ENCODE measurements at regions of chr10 and their contacts with region 1.

Region 1: DNA sequence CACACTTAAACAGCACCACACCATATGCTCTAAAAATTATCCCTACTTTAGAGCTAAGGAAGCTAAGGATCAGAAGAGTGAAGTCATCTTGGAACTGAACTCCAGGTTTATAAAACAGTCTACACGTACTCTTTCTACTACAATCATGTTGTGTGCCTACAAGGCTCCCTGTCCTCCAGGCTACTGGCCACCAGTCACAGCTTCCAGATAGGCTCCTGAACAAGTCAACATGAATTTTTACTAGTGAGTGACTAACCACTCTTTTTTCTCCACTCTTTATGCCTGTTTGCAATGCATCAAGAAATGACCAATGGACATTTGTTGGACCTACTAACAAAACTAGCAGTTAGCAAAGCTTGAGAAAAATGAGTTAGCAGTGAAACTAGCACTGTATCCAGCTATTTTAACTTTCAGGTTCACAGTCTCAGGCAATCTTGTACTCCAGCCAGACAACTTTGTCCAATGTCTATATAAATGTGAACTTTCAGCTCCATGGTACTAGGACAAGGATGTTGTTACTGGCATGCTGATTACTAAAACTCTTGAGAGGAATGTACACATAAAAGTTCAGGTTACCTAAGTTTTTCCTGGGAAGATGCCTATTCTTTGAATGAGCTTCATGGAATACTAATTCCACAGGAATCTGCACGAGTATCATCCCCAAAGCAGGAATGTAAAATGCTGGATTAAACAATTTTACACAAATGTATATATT is 180.0 kb downstream of the BTAF1 start:
- DNase-seq: peak in 1 of 3 donors; percentile 57
- ATAC-seq: peak; percentile 61 to 86 (median 72)
- H3K4me3 ChIP-seq: peak overlapping the region in 2 of 3 donors; percentile 1 to 12
- H3K27ac ChIP-seq: peak overlapping the region; percentile 2 to 93 (median 85)
- H3K4me1 ChIP-seq: peaks cover 0 to 77% (median 33%) of the 10 kb centered on the region in 4 donors
- H3K27me3 ChIP-seq: no peaks in the 10 kb centered on the region
- CTCF ChIP-seq: no peak
- POLR2A ChIP-seq: no peak

Region 2: DNA sequence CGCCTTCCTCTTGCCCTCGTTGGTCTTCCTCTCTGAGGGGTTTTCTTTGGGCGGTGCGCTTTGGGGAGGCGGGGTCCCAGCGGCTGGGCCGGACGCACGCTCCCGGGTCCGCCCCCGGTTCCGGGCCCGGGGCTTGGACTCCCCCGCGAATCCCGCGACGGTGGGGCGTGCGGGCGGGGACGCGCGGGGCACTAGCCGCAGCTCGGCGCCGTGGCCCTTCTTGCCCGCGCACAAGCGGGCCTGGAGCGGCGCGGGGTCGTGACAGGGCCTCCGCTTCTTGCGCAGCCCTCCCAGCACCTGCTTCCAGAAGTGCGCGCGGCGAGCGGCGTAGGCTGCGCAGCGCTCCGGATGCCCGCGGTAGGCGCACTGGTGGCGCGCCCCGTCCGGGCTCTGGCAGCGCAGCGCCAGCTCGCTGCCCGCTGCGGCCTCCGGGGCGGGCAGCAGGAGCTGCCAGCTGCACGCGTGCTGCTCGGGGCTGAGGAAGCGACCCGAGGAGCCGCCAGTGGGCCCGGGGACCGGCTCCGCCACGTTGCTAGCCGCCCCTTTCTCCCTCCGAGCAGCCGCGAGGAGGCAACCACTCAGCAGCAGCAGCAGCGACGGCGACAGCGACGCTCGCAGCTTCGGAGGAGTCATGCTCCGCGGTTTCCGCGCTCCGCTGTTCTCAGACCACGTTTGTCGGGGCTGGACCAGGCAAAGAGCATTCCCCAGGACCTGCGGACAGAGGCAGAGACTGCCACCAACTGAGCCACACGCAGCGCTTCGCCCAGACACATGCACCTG is 195.0 kb before region 1 on chr10:
- intact Hi-C with region 1: no loop called
- DNase-seq: peak; percentile 78 to 82 (median 82)
- ATAC-seq: peak; percentile 92 to 96 (median 94)
- H3K4me3 ChIP-seq: peak overlapping the region; percentile 50 to 83 (median 74)
- H3K27ac ChIP-seq: peak overlapping the region; percentile 20 to 52 (median 34)
- H3K4me1 ChIP-seq: peaks cover 0 to 6% (median 0%) of the 10 kb centered on the region in 4 donors
- H3K27me3 ChIP-seq: no peaks in the 10 kb centered on the region
- CTCF ChIP-seq: peak; percentile 27 to 54 (median 43)
- POLR2A ChIP-seq: peak; percentile 54

Region 3: GRCh38 chr10:91944880-91945630 is 158.5 kb before region 1 on chr10:
- intact Hi-C with region 1: no loop called
- DNase-seq: no peak
- ATAC-seq: no peak
- H3K4me3 ChIP-seq: no peak overlapping the region
- H3K27ac ChIP-seq: no peak overlapping the region
- H3K4me1 ChIP-seq: no peaks in the 10 kb centered on the region
- H3K27me3 ChIP-seq: no peaks in the 10 kb centered on the region
- CTCF ChIP-seq: no peak
- POLR2A ChIP-seq: no peak

Region 4: DNA sequence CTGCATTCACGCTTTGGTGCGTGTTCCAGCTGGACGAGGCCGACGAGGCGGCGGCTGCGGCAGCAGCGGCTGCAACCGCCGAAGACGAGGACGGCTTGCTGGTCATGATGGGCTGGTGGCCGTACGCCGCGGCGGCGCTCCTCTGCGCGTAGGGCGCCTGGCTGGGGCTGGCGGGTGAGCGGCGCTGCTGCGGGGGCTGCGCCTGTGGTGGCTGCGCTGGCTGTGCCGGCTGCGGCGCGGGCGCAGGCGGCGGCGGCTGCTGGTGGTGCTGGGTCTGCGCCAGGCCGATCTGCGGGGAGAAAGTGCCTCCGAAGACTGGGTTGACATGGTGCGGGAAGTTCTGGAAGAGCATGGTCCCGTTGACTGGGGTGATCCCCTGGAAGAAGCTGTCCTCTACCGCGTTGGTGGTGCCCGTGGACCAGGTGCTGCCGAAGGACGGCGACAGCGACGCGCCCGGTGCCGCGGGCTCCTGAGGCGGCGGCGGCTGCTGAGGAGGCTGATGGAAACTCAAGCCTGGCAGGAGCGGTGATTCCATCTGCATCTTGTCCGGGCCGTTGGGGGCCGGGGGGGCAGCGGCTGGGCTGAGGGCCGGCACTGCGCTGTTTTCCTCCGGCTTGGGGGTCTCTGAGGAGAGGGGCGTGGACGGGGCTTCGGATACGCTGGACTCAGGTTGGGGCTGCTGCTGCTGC is 136.2 kb after region 1 on chr10:
- intact Hi-C with region 1: loop called in 1 of 2 experiments (anchors 5 kb)
- DNase-seq: peak; percentile 67 to 68 (median 67)
- ATAC-seq: peak; percentile 41 to 67 (median 58)
- H3K4me3 ChIP-seq: peak overlapping the region; percentile 55 to 68 (median 61)
- H3K27ac ChIP-seq: peak overlapping the region; percentile 79 to 92 (median 83)
- H3K4me1 ChIP-seq: peaks cover 0 to 25% (median 4%) of the 10 kb centered on the region in 4 donors
- H3K27me3 ChIP-seq: no peaks in the 10 kb centered on the region
- CTCF ChIP-seq: no peak
- POLR2A ChIP-seq: no peak

Measured in right lobe of liver (tissue), 6 donors.